Left cardiac atrium (tissue), 4 donors: ENCODE measurements at regions of chr1 and their contacts with region 1.

Region 1: GRCh38 chr1:33295450-33296081 is 25.3 kb downstream of the A3GALT2 start:
- DNase-seq: peak; percentile 83
- ATAC-seq: peak; percentile 79 to 84

Region 2: DNA sequence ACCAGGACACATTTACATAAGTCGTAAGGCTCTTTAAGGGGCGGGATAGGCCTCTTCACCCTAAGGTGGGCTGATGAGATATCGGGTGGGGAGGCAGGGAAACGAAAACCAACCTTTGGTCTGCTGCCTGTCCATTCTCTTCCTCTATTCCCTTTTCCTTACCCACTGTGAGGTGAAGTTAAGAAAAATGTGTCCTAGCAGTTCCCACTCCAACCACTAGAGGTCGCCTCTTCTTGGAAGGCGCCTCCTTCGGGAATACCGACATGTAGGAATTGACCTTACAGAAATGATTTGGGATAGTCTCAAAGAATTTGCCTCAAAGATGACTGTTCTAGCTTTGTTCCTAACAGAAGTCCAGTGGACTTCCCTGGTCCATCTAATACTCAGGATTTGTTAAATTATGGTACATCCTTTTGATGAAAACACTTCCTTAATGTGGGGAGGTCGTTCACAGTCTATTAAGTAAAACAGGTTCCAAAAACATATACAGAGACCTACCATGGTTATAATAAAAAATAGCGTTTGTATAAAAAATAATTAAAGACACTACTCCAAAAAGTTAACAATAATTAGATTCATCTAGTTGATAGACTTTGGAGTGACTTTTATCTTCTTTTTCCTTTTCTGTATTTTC is 200.5 kb before region 1 on chr1:
- intact Hi-C with region 1: no loop called
- DNase-seq: peak; percentile 56
- ATAC-seq: peak in 1 of 2 donors; percentile 17

Region 3: GRCh38 chr1:33127001-33127791 is 168.4 kb before region 1 on chr1:
- intact Hi-C with region 1: no loop called
- DNase-seq: peak; percentile 99
- ATAC-seq: peak; percentile 99 to 100

Region 4: GRCh38 chr1:33219881-33220661 is 75.5 kb before region 1 on chr1:
- intact Hi-C with region 1: loop called in 1 of 2 experiments (anchors 5 kb)
- DNase-seq: no peak
- ATAC-seq: peak in 1 of 2 donors; percentile 45

Region 5: DNA sequence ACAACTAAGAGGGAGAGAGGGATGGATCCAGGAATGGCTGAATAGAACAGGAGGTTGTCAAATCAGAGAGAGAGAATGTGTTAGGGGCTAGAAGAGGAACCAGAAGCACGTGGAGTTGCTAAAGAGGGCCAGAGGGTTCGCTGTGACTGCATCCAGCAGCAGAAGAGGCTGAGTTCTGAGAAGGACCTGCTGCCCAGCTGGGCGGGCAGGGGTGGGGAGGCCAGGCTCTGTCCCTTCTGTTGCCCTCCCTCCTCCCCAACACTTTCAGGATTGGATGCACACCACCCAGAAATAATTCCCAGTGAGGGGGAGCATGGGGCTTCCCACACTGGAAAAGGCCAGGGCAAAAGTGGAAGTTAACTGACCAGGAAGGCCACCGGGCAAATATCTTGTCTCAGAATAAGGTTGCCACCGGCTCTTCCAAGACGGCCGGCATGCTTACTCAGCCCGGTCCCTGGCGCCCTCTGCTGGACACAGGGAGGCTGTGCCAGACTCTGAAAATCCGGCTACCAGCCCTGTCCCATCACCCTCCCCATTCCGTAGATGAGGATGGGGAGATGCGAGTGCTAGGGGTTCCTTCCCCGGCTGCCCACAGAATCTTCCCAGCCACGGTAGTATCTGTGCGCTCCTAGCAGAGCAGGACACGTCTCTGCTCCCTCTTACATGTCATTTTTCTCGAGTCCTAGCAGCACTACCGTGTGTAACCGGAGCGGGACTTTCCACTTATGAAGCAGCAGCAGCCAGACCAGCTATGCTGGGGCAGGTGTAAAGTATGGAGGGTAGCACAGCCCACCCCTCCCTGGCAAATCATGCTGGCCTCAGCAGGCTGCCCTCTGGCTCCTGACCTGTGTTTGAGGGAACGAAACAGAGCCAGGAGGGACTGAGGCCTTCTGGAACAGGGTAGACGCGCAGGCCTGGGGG is 72.2 kb after region 1 on chr1:
- intact Hi-C with region 1: loop called (anchors 2 to 5 kb)
- DNase-seq: peak; percentile 90
- ATAC-seq: peak; percentile 73 to 77

Region 6: DNA sequence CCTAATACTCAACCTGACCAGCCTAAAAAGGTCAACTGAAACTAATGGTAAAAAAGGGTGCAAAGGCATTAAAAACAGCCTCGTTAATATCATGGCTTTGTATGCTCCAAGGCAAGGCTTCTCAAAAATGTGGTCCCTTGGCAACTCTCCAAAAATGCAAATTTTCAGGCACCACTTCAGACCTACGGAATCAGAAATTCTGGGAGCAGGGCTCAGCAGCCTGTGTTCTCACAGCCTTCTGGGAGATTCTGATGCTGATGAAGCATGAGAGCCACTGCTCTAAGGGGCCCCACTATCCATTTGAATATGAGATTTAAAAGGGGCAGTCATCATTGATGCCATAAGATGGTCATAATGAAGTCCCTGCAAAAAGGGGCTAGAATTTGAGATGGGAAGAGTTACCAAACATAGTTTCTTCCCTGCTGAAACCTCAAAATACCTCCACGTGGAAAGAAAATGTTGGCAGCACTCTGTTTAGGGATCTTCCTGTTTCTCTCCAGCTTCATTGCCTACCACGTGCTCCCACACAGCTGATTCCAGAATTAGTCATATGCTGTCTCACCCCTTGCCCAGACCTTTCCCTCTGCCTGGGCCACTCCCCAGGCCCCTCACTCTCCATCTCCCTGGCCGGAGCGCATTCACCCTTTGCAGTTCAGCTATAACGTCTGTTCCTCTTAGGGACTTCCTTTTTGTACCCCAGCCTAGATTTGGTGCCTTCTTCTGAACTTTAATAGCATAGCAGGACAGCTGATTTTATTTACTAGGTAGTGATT is 88.7 kb after region 1 on chr1:
- intact Hi-C with region 1: no loop called
- DNase-seq: no peak
- ATAC-seq: peak in 1 of 2 donors; percentile 76

Region 7: GRCh38 chr1:33455539-33456501 is 160.3 kb after region 1 on chr1:
- intact Hi-C with region 1: loop called in 1 of 2 experiments (anchors 10 kb)
- DNase-seq: peak; percentile 44
- ATAC-seq: peak; percentile 82 to 85

Region 8: GRCh38 chr1:33466159-33466558 is 170.6 kb after region 1 on chr1:
- intact Hi-C with region 1: loop called in 1 of 2 experiments (anchors 5 kb)
- DNase-seq: peak; percentile 42
- ATAC-seq: peak; percentile 24 to 26

Region 9: GRCh38 chr1:33610864-33611455 is 315.4 kb after region 1 on chr1:
- intact Hi-C with region 1: loop called in 1 of 2 experiments (anchors 5 kb)
- DNase-seq: no peak
- ATAC-seq: peak in 1 of 2 donors; percentile 41